AG04450 (cell line): ENCODE measurements at regions of chr2 and their contacts with region 1.

Region 1: GRCh38 chr2:70132244-70133126 is 45.2 kb downstream of the PCBP1 start:
- DNase-seq: no peak
- H3K4me3 ChIP-seq: peak overlapping the region; percentile 43
- H3K27ac ChIP-seq: peak overlapping the region; percentile 87
- H3K27me3 ChIP-seq: no peaks in the 10 kb centered on the region
- CTCF ChIP-seq: no peak

Region 2: GRCh38 chr2:70086838-70087701 is 45.4 kb before region 1 on chr2 and contains the start of gene PCBP1:
- CTCF ChIA-PET with region 1: no interaction called
- POLR2A ChIA-PET with region 1: interaction called, 13 read pairs
- DNase-seq: peak; percentile 85
- H3K4me3 ChIP-seq: peak within 1 kb of the TSS; percentile 97
- H3K27ac ChIP-seq: peak within 1 kb of the TSS; percentile 100
- H3K27me3 ChIP-seq: no peaks in the 10 kb centered on the region
- CTCF ChIP-seq: no peak
- polyA plus RNA-seq, gene PCBP1: 63.8 and 91.3 TPM in 2 replicates

Region 3: DNA sequence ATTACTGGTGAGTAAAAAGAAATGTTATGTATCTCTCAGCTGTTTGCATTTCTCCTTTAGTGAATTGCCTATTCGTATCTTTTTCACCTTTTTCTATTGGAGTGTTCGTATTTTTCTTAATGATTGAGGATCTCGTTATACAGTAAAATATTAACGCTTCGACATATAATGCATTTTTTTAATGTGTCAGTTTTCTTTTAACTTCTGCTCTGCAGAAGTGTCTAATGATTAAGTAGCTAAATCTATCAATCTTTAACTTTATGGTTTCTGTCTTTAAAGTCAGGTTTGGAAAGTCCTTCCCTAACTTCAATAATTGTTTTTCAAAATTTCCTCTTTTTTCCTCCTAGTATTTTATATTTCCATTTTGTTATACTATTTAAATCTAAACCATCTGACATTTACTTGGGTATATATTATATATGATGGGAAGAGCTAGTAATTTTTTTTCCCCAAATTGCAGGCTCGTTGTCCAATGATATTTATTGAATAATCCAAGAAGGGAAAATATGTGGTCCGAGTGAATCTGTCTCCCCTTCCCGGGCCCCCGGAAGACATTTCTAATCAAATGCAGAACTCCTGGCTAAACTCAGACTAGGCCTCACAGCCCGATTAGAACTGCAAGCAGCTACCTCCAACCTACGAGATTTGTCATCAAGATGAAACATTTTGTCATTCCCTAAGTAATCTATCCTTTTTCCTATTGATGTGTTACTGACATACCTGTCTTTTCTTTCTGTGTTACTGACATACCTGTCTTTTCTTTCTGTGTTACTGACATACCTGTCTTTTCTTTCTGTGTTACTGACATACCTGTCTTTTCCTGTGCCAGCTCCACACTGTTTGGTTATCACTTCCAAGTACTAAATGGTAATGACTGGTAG is 28.0 kb before region 1 on chr2:
- CTCF ChIA-PET with region 1: no interaction called
- POLR2A ChIA-PET with region 1: interaction called, 13 read pairs
- DNase-seq: peak; percentile 34
- H3K4me3 ChIP-seq: no peak overlapping the region
- H3K27ac ChIP-seq: no peak overlapping the region
- H3K27me3 ChIP-seq: no peaks in the 10 kb centered on the region
- CTCF ChIP-seq: no peak

Region 4: GRCh38 chr2:70241338-70241737 is 108.9 kb after region 1 on chr2:
- CTCF ChIA-PET with region 1: no interaction called
- POLR2A ChIA-PET with region 1: no interaction called
- DNase-seq: no peak
- H3K4me3 ChIP-seq: no peak overlapping the region
- H3K27ac ChIP-seq: no peak overlapping the region
- H3K27me3 ChIP-seq: no peaks in the 10 kb centered on the region
- CTCF ChIP-seq: no peak